PC-3 (cell line): ENCODE measurements at regions of chr4 and their contacts with region 1.

Region 1: DNA sequence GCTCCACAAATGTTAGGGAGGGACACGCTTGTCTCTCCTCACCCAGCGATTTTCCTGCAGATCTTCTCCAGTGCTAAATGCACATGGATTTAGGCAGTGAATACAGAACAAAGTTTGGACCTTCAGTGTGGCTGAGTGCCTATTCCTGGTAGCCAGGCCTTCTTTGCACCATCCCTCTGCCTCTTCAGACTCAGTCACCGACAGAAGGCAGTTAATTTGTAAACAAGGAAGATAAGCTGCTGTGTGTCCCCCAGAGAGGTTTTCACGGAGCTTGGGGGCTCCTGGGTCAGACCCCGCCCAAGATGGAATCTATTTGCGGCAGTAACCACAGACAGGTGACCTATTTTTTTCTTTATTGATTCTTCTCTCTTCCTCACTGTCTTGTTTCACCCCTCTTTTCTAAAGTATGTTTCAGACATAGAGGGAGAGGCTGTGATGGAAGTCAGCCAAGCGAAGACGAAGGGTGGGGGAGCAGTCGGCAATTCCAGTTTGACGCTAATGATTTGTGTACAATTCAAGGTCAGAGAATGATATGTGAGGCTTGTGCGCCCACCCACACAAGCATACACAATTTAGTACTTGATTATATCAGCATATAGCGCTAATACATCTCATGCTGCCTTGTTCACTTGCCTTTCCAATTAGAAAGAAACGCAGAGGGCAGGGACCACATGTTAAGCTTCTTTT is 200.8 kb downstream of the MGST2 start:
- DNase-seq: no peak
- ATAC-seq: no peak
- H3K4me3 ChIP-seq: no peak overlapping the region
- H3K27ac ChIP-seq: no peak overlapping the region
- H3K4me1 ChIP-seq: peaks cover 8% of the 10 kb centered on the region
- H3K27me3 ChIP-seq: no peaks in the 10 kb centered on the region
- CTCF ChIP-seq: no peak

Region 2: DNA sequence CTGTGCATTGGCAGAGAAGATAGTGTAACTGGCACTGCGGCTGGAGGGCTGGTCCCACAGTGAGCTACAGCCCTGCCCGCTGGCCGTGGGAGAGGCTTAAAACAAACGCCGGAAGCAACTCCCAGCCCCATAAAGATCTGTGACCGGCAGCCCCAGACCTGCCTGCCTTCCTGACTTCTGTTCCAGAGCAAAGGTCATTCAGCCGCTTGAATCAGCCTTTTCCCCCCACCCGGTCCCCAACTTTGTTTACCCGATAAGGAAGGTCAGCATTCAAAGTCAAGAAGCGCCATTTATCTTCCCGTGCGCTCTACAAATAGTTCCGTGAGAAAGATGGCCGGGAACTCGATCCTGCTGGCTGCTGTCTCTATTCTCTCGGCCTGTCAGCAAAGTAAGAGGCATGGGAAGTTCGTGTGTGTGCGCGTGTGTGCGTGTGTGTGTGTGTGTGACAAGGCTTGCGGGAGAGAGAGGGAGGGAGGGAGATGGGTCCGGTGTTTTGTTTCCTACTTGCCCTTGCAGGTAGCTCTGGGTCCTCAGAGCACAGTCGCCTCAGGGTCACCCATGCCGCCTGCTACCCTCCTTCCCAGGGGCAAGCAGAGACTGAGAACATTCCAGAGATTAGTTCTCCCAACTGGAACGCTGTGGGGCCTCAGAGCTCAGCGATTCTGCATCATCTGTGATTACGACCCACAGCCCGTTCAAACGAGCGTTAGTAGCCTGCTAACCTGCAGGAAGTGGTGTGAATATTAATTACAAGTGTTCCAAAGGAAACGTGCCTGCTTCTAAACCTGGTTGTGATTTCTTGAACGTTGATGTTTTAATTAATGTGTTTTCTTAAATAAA is 200.5 kb before region 1 on chr4 and contains the start of gene MGST2:
- CTCF ChIA-PET with region 1: no interaction called
- POLR2A ChIA-PET with region 1: interaction called, 35 read pairs
- intact Hi-C with region 1: no loop called
- DNase-seq: peak; percentile 58
- ATAC-seq: peak; percentile 82
- H3K4me3 ChIP-seq: peak within 1 kb of the TSS; percentile 70
- H3K27ac ChIP-seq: peak within 1 kb of the TSS; percentile 80
- H3K4me1 ChIP-seq: peaks cover 16% of the 10 kb centered on the region
- H3K27me3 ChIP-seq: no peaks in the 10 kb centered on the region
- CTCF ChIP-seq: no peak
- total RNA-seq, gene MGST2: 31.6 and 39.0 TPM in 2 replicates